ENCODE measurements at regions of chr12 and their contacts with region 1.

Region 1: GRCh38 chr12:56636675-56637540 is 6.8 kb upstream of the BAZ2A start:
- H3K4me3 ChIP-seq: peak overlapping the region; percentile 76
- H3K27ac ChIP-seq: peak overlapping the region; percentile 91
- H3K4me1 ChIP-seq: peaks cover 18% of the 10 kb centered on the region
- CTCF ChIP-seq: peak; percentile 90

Region 2: GRCh38 chr12:56521590-56522371 is 115.1 kb before region 1 on chr12 and contains the start of gene RBMS2:
- CTCF ChIA-PET with region 1: interaction called, 26 read pairs
- POLR2A ChIA-PET with region 1: interaction called, 27 read pairs
- H3K4me3 ChIP-seq: peak within 1 kb of the TSS; percentile 29
- H3K27ac ChIP-seq: peak within 1 kb of the TSS; percentile 67
- H3K4me1 ChIP-seq: peaks cover 3% of the 10 kb centered on the region; the same call in 1 of the 2 replicates
- CTCF ChIP-seq: no peak

Region 3: GRCh38 chr12:56601503-56601902 is 35.4 kb before region 1 on chr12:
- CTCF ChIA-PET with region 1: interaction called, 51 read pairs
- POLR2A ChIA-PET with region 1: interaction called, 12 read pairs
- H3K4me3 ChIP-seq: no peak overlapping the region
- H3K27ac ChIP-seq: no peak overlapping the region
- H3K4me1 ChIP-seq: no peaks in the 10 kb centered on the region
- CTCF ChIP-seq: 0 out of 2 replicates have a peak, but pooled peaks have one; percentile 21

Region 4: GRCh38 chr12:56670836-56671235 is 33.9 kb after region 1 on chr12:
- CTCF ChIA-PET with region 1: interaction called, 12 read pairs
- POLR2A ChIA-PET with region 1: interaction called, 5 read pairs
- H3K4me3 ChIP-seq: no peak overlapping the region
- H3K27ac ChIP-seq: peak overlapping the region; percentile 54; the same call in 1 of the 2 replicates
- H3K4me1 ChIP-seq: 0 out of 2 replicates have a peak, but pooled peaks cover 2% of the 10 kb centered on the region
- CTCF ChIP-seq: no peak

Region 5: GRCh38 chr12:56724972-56725722 is 88.2 kb after region 1 on chr12 and contains the start of gene NACA:
- CTCF ChIA-PET with region 1: interaction called, 9 read pairs
- POLR2A ChIA-PET with region 1: interaction called, 22 read pairs
- H3K4me3 ChIP-seq: peak within 1 kb of the TSS; percentile 73
- H3K27ac ChIP-seq: peak within 1 kb of the TSS; percentile 99
- H3K4me1 ChIP-seq: peaks cover 7% of the 10 kb centered on the region; the same call in 1 of the 2 replicates
- CTCF ChIP-seq: peak; percentile 12; the same call in 1 of the 2 replicates